ENCODE measurements at regions of chr3 and their contacts with region 1.

Region 1: GRCh38 chr3:47989981-47990440 is 26.2 kb downstream of the MAP4 start:
- DNase-seq: peak; percentile 72
- H3K4me3 Mint-ChIP-seq: no peak overlapping the region
- H3K27ac Mint-ChIP-seq: no peak overlapping the region
- H3K4me1 Mint-ChIP-seq: peaks cover 9% of the 10 kb centered on the region
- H3K27me3 Mint-ChIP-seq: no peaks in the 10 kb centered on the region
- CTCF ChIP-seq: peak; percentile 64

Region 2: GRCh38 chr3:47824541-47825473 is 165.2 kb before region 1 on chr3:
- CTCF ChIA-PET with region 1: interaction called, 10 read pairs
- intact Hi-C with region 1: no loop called
- DNase-seq: peak; percentile 88
- H3K4me3 Mint-ChIP-seq: peak overlapping the region; percentile 84
- H3K27ac Mint-ChIP-seq: peak overlapping the region; percentile 1
- H3K4me1 Mint-ChIP-seq: peaks cover 10% of the 10 kb centered on the region
- H3K27me3 Mint-ChIP-seq: no peaks in the 10 kb centered on the region
- CTCF ChIP-seq: peak; percentile 49

Region 3: GRCh38 chr3:47836986-47837385 is 153.0 kb before region 1 on chr3:
- CTCF ChIA-PET with region 1: interaction called, 13 read pairs
- intact Hi-C with region 1: loop called (anchors 2 kb)
- DNase-seq: no peak
- H3K4me3 Mint-ChIP-seq: no peak overlapping the region
- H3K27ac Mint-ChIP-seq: peak overlapping the region; percentile 31
- H3K4me1 Mint-ChIP-seq: no peaks in the 10 kb centered on the region
- H3K27me3 Mint-ChIP-seq: no peaks in the 10 kb centered on the region
- CTCF ChIP-seq: no peak

Region 4: DNA sequence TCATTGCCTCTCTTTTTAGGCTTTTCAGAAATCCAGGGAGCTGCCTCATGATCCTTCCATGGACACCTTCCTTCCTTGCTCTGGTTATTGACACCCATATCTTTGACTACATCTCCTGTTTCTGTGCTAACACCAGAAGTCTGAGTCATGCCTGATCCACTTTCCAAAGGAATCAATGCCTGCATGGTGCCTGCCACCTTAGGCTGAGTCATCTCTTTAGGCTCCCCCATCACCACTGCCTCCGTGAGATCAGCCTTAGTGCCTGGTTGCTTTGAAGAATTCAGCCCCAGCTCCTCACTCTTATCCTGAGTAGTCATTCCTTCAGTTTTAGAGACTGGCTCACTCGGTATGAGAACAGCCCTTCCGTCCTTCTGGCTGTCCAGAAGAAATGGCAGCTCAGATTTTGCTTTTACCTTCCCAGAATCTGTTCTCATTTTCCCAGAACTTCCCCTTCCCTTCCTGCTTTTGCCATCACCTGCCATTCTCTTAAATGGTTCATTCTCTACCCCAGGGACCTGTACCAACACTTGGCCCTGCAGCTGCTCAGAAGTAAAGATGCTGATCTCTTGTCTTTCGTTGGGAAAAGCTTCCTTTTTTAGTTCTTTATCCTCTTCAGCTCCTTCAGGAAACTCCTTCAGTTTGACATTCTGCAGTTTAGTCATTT is 79.1 kb before region 1 on chr3:
- CTCF ChIA-PET with region 1: interaction called, 3 read pairs
- intact Hi-C with region 1: loop called (anchors 10 kb)
- DNase-seq: peak; percentile 58
- H3K4me3 Mint-ChIP-seq: no peak overlapping the region
- H3K27ac Mint-ChIP-seq: peak overlapping the region; percentile 67
- H3K4me1 Mint-ChIP-seq: peaks cover 32% of the 10 kb centered on the region
- H3K27me3 Mint-ChIP-seq: no peaks in the 10 kb centered on the region
- CTCF ChIP-seq: no peak

Region 5: DNA sequence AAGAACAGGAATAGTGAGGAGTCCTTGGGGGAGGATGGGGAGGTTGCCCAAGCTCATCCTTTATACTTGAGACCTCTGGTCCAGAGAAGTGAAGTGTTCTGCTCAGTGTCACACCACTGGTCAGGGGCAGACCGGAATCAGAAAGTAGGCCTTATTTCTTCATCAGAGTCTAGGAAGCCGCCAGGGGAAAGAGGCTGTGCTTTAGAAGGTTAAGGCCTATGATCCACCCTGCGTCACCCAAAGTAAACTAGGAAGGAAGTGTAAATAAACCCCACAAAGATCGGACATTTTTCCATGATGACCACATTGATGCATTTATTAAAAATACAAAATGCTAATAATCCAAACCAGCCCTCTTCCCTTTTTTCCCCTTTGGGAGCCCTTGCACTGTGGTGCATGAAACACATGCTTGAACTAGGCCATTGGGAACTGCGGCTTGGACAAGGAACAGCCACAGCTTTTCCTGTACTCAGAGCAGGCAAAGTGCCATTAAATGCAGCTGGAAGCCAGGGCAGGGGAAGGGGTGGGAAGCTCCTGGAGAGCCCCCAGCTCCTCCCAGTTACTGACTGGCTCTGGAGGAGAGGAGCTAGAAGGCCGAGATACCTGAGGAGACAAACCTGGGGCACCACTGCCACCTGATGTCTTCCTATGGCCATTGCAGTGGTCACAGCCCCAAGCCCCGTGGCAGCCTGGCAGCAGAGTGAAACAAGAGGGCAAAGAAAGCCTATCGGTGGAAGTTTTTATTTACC is 161.2 kb after region 1 on chr3:
- CTCF ChIA-PET with region 1: interaction called, 11 read pairs
- intact Hi-C with region 1: loop called (anchors 1 kb)
- DNase-seq: peak; percentile 85
- H3K4me3 Mint-ChIP-seq: no peak overlapping the region
- H3K27ac Mint-ChIP-seq: no peak overlapping the region
- H3K4me1 Mint-ChIP-seq: peaks cover 35% of the 10 kb centered on the region
- H3K27me3 Mint-ChIP-seq: no peaks in the 10 kb centered on the region
- CTCF ChIP-seq: peak; percentile 75

Region 6: DNA sequence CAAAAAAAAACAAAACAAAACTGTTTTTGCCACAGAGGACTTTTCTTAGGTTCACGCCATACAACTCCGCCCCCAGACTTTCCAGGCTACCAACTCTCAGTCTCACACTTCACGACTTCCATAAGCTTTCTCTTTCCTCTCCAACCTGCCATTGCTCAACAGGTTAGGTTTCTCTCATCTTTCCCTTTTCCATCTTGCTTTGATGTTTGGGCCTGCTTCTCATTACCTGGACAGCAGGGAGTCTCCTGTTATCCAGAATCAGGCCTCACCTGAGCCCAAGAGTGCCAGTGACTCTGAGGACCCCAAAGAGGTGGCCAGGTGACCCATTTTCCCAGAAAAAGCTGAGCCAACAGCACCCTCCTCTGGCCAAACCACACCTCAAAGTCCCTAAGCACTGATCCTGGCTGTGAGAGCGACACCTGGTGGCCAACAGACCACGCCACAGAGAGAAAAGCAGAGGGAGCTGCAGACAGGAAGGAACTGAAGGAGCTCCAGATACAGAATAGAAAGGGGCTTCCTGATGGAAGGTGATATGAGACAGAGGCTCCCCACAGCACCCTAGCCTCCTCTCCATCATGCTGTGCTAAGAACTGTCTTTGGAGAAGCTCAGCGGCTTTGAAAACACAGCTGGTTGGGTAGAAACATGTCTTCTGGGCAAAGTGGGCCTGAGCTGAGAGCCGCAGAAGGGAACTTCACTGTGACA is 445.9 kb after region 1 on chr3:
- CTCF ChIA-PET with region 1: no interaction called
- intact Hi-C with region 1: no loop called
- DNase-seq: peak; percentile 87
- H3K4me3 Mint-ChIP-seq: no peak overlapping the region
- H3K27ac Mint-ChIP-seq: no peak overlapping the region
- H3K4me1 Mint-ChIP-seq: peaks cover 37% of the 10 kb centered on the region
- H3K27me3 Mint-ChIP-seq: no peaks in the 10 kb centered on the region
- CTCF ChIP-seq: peak; percentile 93